Activated CD4-positive, alpha-beta T cell treated with anti-CD3 and anti-CD28 coated beads for 36 hours (primary cell): ENCODE measurements at regions of chr12 and their contacts with region 1.

Region 1: DNA sequence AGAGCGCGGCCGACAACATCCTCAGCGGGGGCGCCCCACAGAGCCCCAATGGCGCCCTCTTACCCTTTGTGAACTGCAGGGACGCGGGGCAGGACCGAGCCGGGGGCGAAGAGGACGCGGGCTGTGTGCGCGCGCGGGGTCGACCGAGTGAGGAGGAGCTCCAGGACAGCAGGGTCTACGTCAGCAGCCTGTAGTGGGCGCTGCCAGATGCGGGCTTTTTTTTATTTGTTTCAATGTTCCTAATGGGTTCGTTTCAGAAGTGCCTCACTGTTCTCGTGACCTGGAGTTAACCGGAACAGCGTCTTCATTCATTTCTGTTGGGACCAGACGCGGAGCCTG is 103.8 kb upstream of the FKBP4 start:
- DNase-seq: peak; percentile 76
- ATAC-seq: peak; percentile 66
- H3K4me3 Mint-ChIP-seq: peak overlapping the region; percentile 79
- H3K27ac Mint-ChIP-seq: peak overlapping the region; percentile 79
- H3K4me1 Mint-ChIP-seq: peaks cover 26% of the 10 kb centered on the region
- H3K27me3 Mint-ChIP-seq: peaks cover 5% of the 10 kb centered on the region

Region 2: GRCh38 chr12:2613326-2614073 is 77.5 kb before region 1 on chr12:
- CTCF ChIA-PET with region 1: interaction called, 4 read pairs
- POLR2A ChIA-PET with region 1: no interaction called
- intact Hi-C with region 1: loop called in 1 of 2 experiments (anchors 2 kb)
- DNase-seq: peak; percentile 78
- ATAC-seq: peak; percentile 99
- H3K4me3 Mint-ChIP-seq: no peak overlapping the region
- H3K27ac Mint-ChIP-seq: no peak overlapping the region
- H3K4me1 Mint-ChIP-seq: peaks cover 13% of the 10 kb centered on the region
- H3K27me3 Mint-ChIP-seq: peaks cover 36% of the 10 kb centered on the region

Region 3: DNA sequence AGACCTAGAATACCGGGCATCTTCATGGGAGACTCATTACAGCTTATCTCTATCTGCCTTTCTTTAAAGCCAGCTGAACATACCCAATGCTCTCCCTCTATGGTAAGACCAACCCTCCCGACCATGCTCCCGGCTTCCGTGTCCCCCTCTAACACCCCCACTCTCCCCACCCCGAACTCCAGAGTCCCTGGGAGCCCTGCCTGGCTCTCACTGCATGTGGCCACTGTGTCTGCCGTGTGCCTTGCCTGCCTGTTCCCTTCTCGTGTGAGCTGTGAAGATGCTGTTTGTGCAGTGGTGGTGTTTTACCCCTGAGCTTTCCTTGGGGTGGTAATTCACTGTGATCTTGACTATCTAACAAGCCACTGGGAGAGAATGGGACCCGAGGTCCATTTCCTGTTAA is 42.6 kb before region 1 on chr12:
- CTCF ChIA-PET with region 1: no interaction called
- POLR2A ChIA-PET with region 1: no interaction called
- intact Hi-C with region 1: no loop called
- DNase-seq: no peak
- ATAC-seq: no peak
- H3K4me3 Mint-ChIP-seq: no peak overlapping the region
- H3K27ac Mint-ChIP-seq: no peak overlapping the region
- H3K4me1 Mint-ChIP-seq: no peaks in the 10 kb centered on the region
- H3K27me3 Mint-ChIP-seq: peaks cover 27% of the 10 kb centered on the region

Region 4: GRCh38 chr12:2666411-2666810 is 24.6 kb before region 1 on chr12:
- CTCF ChIA-PET with region 1: no interaction called
- POLR2A ChIA-PET with region 1: no interaction called
- intact Hi-C with region 1: no loop called
- DNase-seq: no peak
- ATAC-seq: peak; percentile 78
- H3K4me3 Mint-ChIP-seq: no peak overlapping the region
- H3K27ac Mint-ChIP-seq: no peak overlapping the region
- H3K4me1 Mint-ChIP-seq: no peaks in the 10 kb centered on the region
- H3K27me3 Mint-ChIP-seq: no peaks in the 10 kb centered on the region

Region 5: DNA sequence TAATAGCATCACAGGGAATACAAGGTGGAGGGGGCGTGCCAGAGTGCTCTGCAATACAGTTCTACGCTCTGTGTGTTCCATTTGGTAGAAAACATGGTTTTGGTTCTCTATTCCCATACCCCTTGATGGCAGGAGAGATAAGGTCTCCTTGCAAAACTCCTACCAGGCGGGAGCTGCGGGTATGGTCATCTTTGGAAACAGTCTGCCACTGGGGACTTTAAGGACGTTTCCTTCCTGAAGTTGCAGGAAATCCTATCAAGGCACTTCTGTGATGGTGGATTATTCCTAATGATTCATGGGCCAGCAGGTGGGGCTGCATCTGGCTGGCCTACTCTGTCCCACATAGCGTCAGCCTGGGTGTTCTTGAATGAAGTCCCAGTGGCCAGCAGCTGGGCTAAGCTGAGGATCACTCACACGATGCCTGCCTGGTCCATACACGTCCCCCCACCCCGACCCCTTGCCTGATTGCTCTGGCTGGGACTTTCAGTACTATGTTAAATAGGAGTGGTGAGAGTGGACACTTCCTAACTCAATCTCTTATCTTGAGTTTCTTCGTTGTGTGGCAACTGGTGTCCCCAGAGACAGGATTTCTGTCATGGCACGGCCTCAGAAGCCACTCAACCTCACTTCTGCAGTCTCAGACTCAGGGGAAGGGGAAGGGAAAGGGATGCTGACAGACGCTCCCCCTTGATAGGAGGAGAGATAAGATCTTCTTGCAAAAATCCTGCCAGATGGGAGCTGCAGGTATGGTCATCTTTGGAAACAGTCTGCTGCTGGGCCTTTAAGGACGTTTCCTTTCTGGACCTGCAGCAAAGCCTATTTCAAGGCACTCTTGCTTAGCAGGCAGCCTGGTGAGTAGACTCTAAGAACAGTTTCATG is 42.7 kb after region 1 on chr12:
- CTCF ChIA-PET with region 1: no interaction called
- POLR2A ChIA-PET with region 1: no interaction called
- intact Hi-C with region 1: no loop called
- DNase-seq: no peak
- ATAC-seq: no peak
- H3K4me3 Mint-ChIP-seq: no peak overlapping the region
- H3K27ac Mint-ChIP-seq: no peak overlapping the region
- H3K4me1 Mint-ChIP-seq: peaks cover 8% of the 10 kb centered on the region
- H3K27me3 Mint-ChIP-seq: peaks cover 17% of the 10 kb centered on the region

Region 6: DNA sequence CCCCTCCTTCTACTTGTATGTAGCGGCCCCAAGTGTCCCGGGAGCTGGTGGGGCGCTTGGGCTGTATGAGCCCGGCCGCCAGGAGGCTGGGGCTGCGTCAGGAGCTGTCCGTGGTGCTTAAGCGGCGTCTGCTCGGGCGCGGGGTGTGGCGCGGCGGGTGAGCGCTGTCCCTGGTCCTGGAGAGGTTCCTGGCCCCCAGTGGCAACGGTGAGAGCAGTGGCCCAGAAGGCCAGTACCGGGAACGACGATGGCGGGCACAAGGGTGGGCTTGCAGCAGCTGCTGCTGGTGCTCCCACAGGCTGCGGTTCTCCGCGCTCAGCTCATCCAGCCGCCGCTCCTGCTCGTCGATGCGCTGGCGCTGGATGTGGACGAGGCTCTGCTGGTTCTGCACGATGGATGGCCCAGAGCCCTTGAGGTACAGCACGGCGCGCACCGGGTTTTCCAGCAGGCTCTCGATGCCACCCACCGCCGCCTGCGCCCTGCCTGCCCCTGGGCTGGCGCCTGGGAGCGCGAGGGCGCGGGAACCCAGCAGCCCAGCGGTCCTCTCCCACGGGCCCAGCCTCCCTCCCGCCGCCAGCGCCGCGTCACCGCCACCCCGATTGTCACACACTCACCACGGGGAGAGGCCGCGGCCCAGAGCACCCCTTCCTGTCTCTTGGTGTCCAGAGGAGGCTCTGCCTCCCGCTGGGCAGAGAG is 61.8 kb after region 1 on chr12:
- CTCF ChIA-PET with region 1: no interaction called
- POLR2A ChIA-PET with region 1: no interaction called
- intact Hi-C with region 1: loop called in 1 of 2 experiments (anchors 2 kb)
- DNase-seq: peak; percentile 92
- ATAC-seq: peak; percentile 99
- H3K4me3 Mint-ChIP-seq: no peak overlapping the region
- H3K27ac Mint-ChIP-seq: no peak overlapping the region
- H3K4me1 Mint-ChIP-seq: no peaks in the 10 kb centered on the region
- H3K27me3 Mint-ChIP-seq: peaks cover 22% of the 10 kb centered on the region

Region 7: DNA sequence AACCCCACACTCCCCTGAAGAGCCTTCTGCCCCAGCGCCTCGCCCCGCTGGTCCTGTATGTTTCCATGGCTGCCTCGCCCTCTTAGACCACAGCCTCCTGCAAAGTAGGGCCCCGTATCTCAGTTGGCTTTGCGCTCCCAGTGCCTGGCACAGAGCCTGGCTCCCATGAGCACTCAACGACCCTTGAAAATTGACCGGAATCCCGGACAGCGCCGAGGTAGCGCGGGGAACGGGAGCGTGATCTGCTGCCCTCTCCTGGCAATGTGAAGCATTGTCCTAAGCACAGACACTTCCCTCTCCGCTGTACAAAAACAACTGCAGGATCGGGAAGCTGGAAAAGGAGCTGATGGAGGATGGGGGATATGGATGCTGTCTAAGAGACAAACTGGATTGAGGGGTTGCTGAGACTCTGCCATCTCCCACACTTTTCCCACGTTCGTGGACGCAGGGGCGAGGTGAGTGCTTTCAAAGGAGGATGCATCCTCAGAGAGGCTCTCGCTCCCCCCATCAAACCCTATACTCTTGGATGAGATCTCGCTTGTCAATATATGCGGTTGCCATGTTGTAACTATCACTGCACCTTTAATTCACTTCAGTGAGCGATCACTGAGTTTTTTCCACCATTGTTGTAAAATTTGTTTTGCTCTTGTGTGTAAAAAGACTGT is 93.1 kb after region 1 on chr12:
- CTCF ChIA-PET with region 1: interaction called, 6 read pairs
- POLR2A ChIA-PET with region 1: no interaction called
- intact Hi-C with region 1: loop called in 1 of 2 experiments (anchors 2 kb)
- DNase-seq: peak; percentile 66
- ATAC-seq: peak; percentile 90
- H3K4me3 Mint-ChIP-seq: peak overlapping the region; percentile 62
- H3K27ac Mint-ChIP-seq: no peak overlapping the region
- H3K4me1 Mint-ChIP-seq: peaks cover 8% of the 10 kb centered on the region
- H3K27me3 Mint-ChIP-seq: peaks cover 12% of the 10 kb centered on the region

Region 8: DNA sequence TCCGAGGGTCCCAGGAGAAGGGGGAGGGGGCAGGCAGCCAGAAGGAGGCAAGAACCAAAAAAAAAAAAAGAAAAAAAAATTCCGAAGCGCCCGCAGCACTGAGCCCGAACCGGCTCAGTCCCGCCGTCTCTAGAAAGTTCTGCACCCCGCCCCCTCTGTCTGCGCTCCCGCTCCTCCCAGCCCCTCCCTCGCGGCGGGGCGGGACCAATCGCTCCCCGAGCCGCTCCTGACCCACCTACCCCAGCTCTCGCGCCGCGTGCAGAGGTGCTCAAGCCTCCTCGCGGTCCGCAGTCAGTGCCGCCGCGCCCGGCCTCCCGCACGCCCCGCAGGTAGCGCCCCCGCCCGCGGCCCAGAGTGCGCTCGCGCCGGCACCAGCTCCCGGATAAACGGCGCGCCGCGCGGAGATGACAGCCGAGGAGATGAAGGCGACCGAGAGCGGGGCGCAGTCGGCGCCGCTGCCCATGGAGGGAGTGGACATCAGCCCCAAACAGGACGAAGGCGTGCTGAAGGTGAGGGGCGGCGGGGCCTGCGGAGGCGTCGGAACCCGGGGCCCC is 103.8 kb after region 1 on chr12 and contains the start of gene FKBP4:
- CTCF ChIA-PET with region 1: interaction called, 5 read pairs
- POLR2A ChIA-PET with region 1: interaction called, 3 read pairs
- intact Hi-C with region 1: loop called in 1 of 2 experiments (anchors 1 kb)
- DNase-seq: peak; percentile 95
- ATAC-seq: peak; percentile 90
- H3K4me3 Mint-ChIP-seq: peak within 1 kb of the TSS; percentile 90
- H3K27ac Mint-ChIP-seq: peak within 1 kb of the TSS; percentile 67
- H3K4me1 Mint-ChIP-seq: peaks cover 20% of the 10 kb centered on the region
- H3K27me3 Mint-ChIP-seq: no peaks in the 10 kb centered on the region
- total RNA-seq, gene FKBP4: 129 to 182 TPM